CD4-positive, alpha-beta memory T cell (primary cell): ENCODE measurements at regions of chr12 and their contacts with region 1.

Region 1: DNA sequence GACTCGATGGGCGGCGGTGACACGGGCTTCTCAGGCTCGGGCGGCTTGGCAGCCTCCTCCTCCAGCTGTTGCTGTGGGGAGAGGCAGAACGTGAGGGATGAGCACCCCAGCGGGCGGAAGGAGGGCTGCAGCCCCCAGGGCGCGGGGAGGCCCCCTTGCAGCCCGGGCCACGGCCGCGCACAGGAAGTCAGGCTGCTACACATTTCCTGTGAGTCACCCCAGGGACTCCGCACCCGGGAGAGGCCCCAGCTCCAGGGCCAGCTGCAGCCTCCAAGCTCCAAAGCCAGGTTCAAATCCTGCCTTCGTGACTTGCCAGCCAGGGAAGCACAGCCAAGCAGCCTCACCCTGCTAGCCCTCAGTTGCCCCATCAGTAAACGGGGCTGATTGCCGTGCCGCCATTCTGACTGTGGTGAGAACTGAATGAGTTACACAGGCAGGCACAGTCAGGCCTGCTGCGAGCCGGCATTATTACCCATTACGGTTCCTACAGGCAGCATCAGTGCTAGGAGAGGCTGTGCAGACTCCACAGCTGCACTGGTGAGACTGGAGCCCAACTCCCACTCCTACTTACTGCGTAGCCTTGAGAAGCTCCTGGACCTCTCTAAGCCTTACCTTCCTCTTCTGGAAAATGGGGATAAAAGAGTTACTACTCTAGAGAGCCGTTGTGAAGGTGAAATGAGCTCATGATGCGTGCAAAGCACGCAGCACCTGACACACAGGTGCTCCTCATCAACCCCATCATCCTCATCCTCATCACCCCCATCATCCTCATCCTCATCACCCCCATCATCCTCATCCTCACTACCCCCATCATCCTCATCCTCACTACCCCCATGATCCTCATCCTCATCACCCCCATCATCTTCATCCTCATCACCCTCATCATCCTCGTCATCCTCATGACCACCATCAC is 100.9 kb downstream of the NCOR2 start:
- DNase-seq: peak; percentile 87 to 97 (median 89)
- H3K4me3 ChIP-seq: peak overlapping the region; percentile 20 to 27
- H3K4me3 Mint-ChIP-seq: peak overlapping the region; percentile 73 to 85 (median 76)
- H3K27ac ChIP-seq: peak overlapping the region; percentile 82
- H3K27ac Mint-ChIP-seq: peak overlapping the region; percentile 93 to 97 (median 94)
- H3K4me1 ChIP-seq: peaks cover 52% of the 10 kb centered on the region
- H3K4me1 Mint-ChIP-seq: peaks cover 39 to 71% (median 55%) of the 10 kb centered on the region in 4 donors
- H3K27me3 ChIP-seq: no peaks in the 10 kb centered on the region
- H3K27me3 Mint-ChIP-seq: no peaks in the 10 kb centered on the region

Region 2: DNA sequence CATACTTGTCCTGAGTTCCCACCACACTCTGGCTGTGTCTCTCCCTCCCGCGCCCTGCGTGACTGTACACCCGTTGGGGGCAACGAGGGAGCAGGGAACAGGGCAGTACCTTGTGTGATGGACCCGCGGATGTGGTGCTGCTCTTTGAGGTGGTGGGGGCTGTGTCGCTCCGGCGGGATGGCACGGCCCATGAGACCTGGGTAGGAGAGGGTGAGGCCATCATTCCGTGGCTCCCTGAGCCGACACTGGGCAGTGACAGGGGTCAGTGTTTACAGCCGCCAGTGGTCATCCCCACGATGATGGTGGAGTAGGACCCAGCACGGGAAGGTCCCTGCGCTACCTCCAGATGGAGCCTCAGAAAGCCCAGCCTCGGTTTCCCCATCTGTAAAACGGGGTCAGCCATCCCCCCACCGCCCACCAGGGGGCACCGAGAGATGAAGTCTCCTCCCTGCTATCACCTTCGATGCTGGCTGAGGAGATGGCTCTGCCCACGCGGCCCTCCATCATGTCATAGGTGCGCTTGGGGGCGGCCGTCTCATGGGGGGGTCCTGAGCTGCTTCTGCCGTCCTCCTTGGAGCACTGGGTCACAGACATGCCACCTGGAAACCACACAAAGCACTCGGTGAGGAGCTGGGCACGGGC is 118.6 kb before region 1 on chr12:
- CTCF ChIA-PET with region 1: no interaction called
- POLR2A ChIA-PET with region 1: no interaction called
- intact Hi-C with region 1: loop called (anchors 5 kb)
- DNase-seq: peak in 2 of 5 donors; percentile 8 to 15
- H3K4me3 ChIP-seq: no peak overlapping the region
- H3K4me3 Mint-ChIP-seq: no peak overlapping the region
- H3K27ac ChIP-seq: no peak overlapping the region
- H3K27ac Mint-ChIP-seq: peak overlapping the region in 1 of 7 donors; percentile 12
- H3K4me1 ChIP-seq: no peaks in the 10 kb centered on the region
- H3K4me1 Mint-ChIP-seq: peaks cover 0 to 4% (median 0%) of the 10 kb centered on the region in 4 donors
- H3K27me3 ChIP-seq: no peaks in the 10 kb centered on the region
- H3K27me3 Mint-ChIP-seq: no peaks in the 10 kb centered on the region

Region 3: DNA sequence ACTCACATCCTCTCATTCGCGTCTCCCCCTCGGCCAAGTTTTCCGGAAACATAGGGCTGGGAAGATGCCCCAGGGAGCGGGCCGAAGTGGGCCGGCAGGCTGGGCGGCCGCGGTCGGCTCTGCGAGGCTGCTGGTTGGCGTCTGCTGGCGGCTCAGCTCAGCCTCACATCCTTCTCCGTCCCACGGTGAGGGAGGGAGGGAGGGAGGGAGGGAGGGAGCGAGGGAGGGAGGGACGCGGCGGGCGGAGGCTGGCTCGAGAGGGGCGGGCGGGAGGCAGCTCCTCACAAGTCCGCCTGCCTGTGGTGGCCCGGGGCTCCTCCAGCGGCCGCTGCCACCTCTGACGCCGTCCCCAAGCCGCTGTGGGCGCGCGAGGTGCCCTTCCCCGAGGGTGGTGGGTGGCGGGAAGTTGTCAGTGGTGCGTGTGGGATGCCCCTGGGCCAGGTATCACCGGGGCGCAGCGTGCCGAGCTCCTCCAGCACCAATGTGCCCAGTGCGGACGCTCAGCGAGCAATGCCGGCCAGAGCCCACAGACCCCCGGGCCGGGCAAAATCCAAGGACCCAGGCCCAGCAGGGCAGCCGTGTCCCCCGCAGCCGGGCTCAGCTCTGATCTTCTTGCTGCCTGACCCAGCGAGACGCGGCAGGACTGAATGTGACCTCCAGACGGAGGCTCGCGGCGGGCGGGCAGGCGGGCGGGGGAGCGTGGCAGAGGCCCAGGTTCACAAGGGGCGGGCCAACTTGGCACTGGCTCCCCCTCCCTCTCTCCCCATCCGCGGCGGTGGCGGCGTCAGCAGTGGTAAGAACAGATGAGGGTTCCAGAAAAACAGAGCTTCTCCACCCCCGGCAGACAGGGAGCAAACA is 77.6 kb before region 1 on chr12:
- CTCF ChIA-PET with region 1: interaction called, 4 read pairs
- POLR2A ChIA-PET with region 1: interaction called, 6 read pairs
- intact Hi-C with region 1: loop called (anchors 2 kb)
- DNase-seq: peak; percentile 61 to 84 (median 68)
- H3K4me3 ChIP-seq: no peak overlapping the region
- H3K4me3 Mint-ChIP-seq: peak overlapping the region; percentile 62 to 81 (median 70)
- H3K27ac ChIP-seq: peak overlapping the region; percentile 31
- H3K27ac Mint-ChIP-seq: peak overlapping the region in 6 of 7 donors; percentile 37 to 79 (median 68)
- H3K4me1 ChIP-seq: peaks cover 27% of the 10 kb centered on the region
- H3K4me1 Mint-ChIP-seq: peaks cover 8 to 35% (median 24%) of the 10 kb centered on the region in 4 donors
- H3K27me3 ChIP-seq: no peaks in the 10 kb centered on the region
- H3K27me3 Mint-ChIP-seq: no peaks in the 10 kb centered on the region

Region 4: GRCh38 chr12:124453419-124454351 is 12.8 kb before region 1 on chr12:
- CTCF ChIA-PET with region 1: interaction called, 41 read pairs
- POLR2A ChIA-PET with region 1: interaction called, 59 read pairs
- intact Hi-C with region 1: loop called (anchors 1 kb)
- DNase-seq: peak; percentile 74 to 96 (median 76)
- H3K4me3 ChIP-seq: peak overlapping the region in 1 of 2 donors; percentile 46
- H3K4me3 Mint-ChIP-seq: peak overlapping the region; percentile 52 to 81 (median 70)
- H3K27ac ChIP-seq: peak overlapping the region; percentile 67
- H3K27ac Mint-ChIP-seq: peak overlapping the region; percentile 82 to 93 (median 88)
- H3K4me1 ChIP-seq: peaks cover 76% of the 10 kb centered on the region
- H3K4me1 Mint-ChIP-seq: peaks cover 26 to 75% (median 54%) of the 10 kb centered on the region in 4 donors
- H3K27me3 ChIP-seq: no peaks in the 10 kb centered on the region
- H3K27me3 Mint-ChIP-seq: no peaks in the 10 kb centered on the region